ENCODE measurements at regions of chr11 and their contacts with region 1.

Region 1: GRCh38 chr11:126318574-126319373 is 14.9 kb downstream of the DCPS start:
- DNase-seq: peak in 5 of 14 experiments; percentile 14 to 57 (median 47)
- ATAC-seq: peak; percentile 85
- H3K4me3 ChIP-seq: no peak overlapping the region
- H3K4me3 Mint-ChIP-seq: peak overlapping the region; percentile 12
- H3K27ac ChIP-seq: peak overlapping the region in 1 of 2 donors; percentile 50
- H3K27ac Mint-ChIP-seq: peak overlapping the region; percentile 40
- H3K4me1 ChIP-seq: peaks cover 28% of the 10 kb centered on the region
- H3K4me1 Mint-ChIP-seq: peaks cover 47% of the 10 kb centered on the region
- H3K27me3 ChIP-seq: no peaks in the 10 kb centered on the region
- H3K27me3 Mint-ChIP-seq: no peaks in the 10 kb centered on the region
- CTCF ChIP-seq: no peak

Region 2: GRCh38 chr11:125990244-125990643 is 328.5 kb before region 1 on chr11:
- CTCF ChIA-PET with region 1: no interaction called
- POLR2A ChIA-PET with region 1: no interaction called
- intact Hi-C with region 1: no loop called
- DNase-seq: no peak
- ATAC-seq: no peak
- H3K4me3 ChIP-seq: no peak overlapping the region
- H3K4me3 Mint-ChIP-seq: no peak overlapping the region
- H3K27ac ChIP-seq: no peak overlapping the region
- H3K27ac Mint-ChIP-seq: no peak overlapping the region
- H3K4me1 ChIP-seq: no peaks in the 10 kb centered on the region
- H3K4me1 Mint-ChIP-seq: no peaks in the 10 kb centered on the region
- H3K27me3 ChIP-seq: no peaks in the 10 kb centered on the region
- H3K27me3 Mint-ChIP-seq: no peaks in the 10 kb centered on the region
- CTCF ChIP-seq: no peak

Region 3: DNA sequence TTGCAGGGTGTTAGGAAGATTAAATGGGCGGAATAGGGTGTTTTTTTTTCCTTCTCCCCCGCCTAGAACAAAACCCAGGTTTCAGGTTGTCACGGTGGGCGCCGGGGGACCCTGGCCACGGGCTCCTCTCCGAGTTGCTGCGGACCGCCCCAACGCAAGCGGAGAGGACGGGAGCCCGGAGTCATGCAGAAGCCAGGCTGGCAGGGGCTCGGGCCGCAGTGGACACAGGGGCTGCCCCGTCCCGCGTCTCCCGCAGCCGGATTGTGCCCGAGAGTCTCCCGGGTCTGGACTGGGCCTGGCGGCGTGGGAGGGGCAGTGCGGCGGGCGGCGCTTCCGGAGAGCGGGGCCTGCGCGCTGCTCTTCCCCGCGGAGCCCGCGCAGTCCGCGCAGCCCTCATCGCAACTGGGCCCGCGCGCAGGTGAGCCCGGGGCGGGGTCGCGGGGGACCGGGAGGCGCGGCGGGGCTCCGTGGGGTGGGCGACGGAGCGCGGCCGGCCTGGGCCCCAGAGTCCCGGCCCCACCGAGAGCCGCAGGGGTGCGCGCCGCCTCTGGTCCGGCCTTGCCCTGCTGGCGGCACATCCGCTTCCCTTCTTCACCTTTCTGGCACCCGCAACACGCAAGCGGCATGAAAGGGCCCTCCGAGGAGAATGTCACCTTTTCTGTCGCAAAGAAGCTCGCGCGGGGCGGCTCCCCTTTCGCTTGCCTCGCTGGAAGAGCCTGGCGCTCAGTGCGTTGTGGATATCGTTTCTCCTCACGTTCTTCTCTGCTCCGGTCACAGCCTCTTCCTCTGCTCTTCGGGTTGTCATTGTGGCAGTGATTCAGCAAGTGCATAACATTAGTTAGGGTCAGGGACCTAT is 35.8 kb before region 1 on chr11 and contains the start of gene TIRAP:
- CTCF ChIA-PET with region 1: no interaction called
- POLR2A ChIA-PET with region 1: interaction called, 10 read pairs
- intact Hi-C with region 1: no loop called
- DNase-seq: peak; percentile 47 to 84 (median 58)
- ATAC-seq: peak; percentile 54
- H3K4me3 ChIP-seq: peak within 1 kb of the TSS; percentile 89
- H3K4me3 Mint-ChIP-seq: peak within 1 kb of the TSS; percentile 95
- H3K27ac ChIP-seq: peak within 1 kb of the TSS; percentile 80 to 89
- H3K27ac Mint-ChIP-seq: peak within 1 kb of the TSS; percentile 99
- H3K4me1 ChIP-seq: peaks cover 56% of the 10 kb centered on the region
- H3K4me1 Mint-ChIP-seq: peaks cover 59% of the 10 kb centered on the region
- H3K27me3 ChIP-seq: no peaks in the 10 kb centered on the region
- H3K27me3 Mint-ChIP-seq: no peaks in the 10 kb centered on the region
- CTCF ChIP-seq: no peak
- total RNA-seq, gene TIRAP: 7.7 to 7.9 TPM

Measured in CD4-positive, alpha-beta T cell (primary cell).